Caco-2 (cell line): ENCODE measurements at regions of chr3 and their contacts with region 1.

Region 1: DNA sequence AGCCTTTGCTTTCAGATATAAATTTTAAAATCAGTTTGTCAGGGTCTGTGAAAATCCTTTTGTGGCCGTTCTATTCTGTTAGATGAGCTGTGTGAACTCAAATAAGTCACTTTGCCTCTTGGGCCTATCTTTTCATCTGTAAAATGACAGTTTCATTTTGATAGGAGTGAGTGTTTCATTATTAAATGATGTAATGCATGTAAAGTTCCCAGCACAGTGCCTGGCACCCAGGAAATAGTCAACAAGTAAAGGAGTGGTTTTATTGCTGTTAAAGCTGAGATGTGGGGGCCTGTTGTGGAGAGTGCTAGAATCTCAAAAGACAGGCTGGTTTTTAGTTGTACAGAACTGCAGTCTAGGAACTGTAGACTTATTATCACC is 394.5 kb upstream of the CFAP20DC start:
- DNase-seq: no peak
- H3K4me3 ChIP-seq: no peak overlapping the region
- H3K4me3 Mint-ChIP-seq: no peak overlapping the region
- H3K27ac Mint-ChIP-seq: no peak overlapping the region
- H3K4me1 ChIP-seq: no peaks in the 10 kb centered on the region
- H3K4me1 Mint-ChIP-seq: no peaks in the 10 kb centered on the region
- H3K27me3 ChIP-seq: no peaks in the 10 kb centered on the region
- H3K27me3 Mint-ChIP-seq: peaks cover 12% of the 10 kb centered on the region
- CTCF ChIP-seq: no peak

Region 2: DNA sequence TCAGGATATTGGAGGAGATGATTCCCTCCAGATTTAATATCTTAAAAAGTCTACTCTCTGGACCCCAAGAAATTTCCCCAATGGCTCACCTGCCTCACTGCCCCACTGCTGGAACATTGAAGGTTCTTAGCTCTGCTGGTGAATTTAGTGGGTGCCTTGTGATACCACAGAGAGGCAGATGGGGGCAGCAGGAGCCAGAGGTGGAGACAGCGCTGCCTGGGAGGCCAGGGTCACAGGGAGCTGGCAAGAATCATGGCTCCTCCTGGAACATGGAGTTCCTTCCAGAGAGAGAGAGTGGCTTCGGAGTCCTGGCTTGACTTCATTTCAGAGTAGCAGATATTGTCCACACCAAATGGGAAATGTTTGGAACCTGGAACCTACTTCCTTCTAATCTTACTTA is 130.9 kb before region 1 on chr3:
- CTCF ChIA-PET with region 1: interaction called, 11 read pairs
- POLR2A ChIA-PET with region 1: no interaction called
- intact Hi-C with region 1: loop called (anchors 5 kb)
- DNase-seq: peak; percentile 48 to 57
- H3K4me3 ChIP-seq: no peak overlapping the region
- H3K4me3 Mint-ChIP-seq: no peak overlapping the region
- H3K27ac Mint-ChIP-seq: no peak overlapping the region
- H3K4me1 ChIP-seq: no peaks in the 10 kb centered on the region
- H3K4me1 Mint-ChIP-seq: peaks cover 4% of the 10 kb centered on the region
- H3K27me3 ChIP-seq: no peaks in the 10 kb centered on the region
- H3K27me3 Mint-ChIP-seq: peaks cover 7% of the 10 kb centered on the region
- CTCF ChIP-seq: peak; percentile 38 to 39